ENCODE measurements at regions of chr19 and their contacts with region 1.

Region 1: GRCh38 chr19:1672038-1672768 is 19.8 kb upstream of the TCF3 start:
- DNase-seq: peak; percentile 40 to 75 (median 48)
- ATAC-seq: peak; percentile 63
- H3K4me3 ChIP-seq: no peak overlapping the region
- H3K4me3 Mint-ChIP-seq: no peak overlapping the region
- H3K27ac ChIP-seq: no peak overlapping the region
- H3K27ac Mint-ChIP-seq: no peak overlapping the region
- H3K4me1 ChIP-seq: peaks cover 26% of the 10 kb centered on the region
- H3K4me1 Mint-ChIP-seq: peaks cover 15% of the 10 kb centered on the region
- H3K27me3 ChIP-seq: peaks cover 59 to 73% of the 10 kb centered on the region in 2 experiments
- H3K27me3 Mint-ChIP-seq: peaks cover 69% of the 10 kb centered on the region
- CTCF ChIP-seq: peak; percentile 91

Region 2: GRCh38 chr19:1540365-1540925 is 131.8 kb before region 1 on chr19:
- CTCF ChIA-PET with region 1: no interaction called
- POLR2A ChIA-PET with region 1: no interaction called
- intact Hi-C with region 1: loop called in 1 of 2 experiments (anchors 10 kb)
- DNase-seq: no peak
- ATAC-seq: no peak
- H3K4me3 ChIP-seq: no peak overlapping the region
- H3K4me3 Mint-ChIP-seq: no peak overlapping the region
- H3K27ac ChIP-seq: no peak overlapping the region
- H3K27ac Mint-ChIP-seq: no peak overlapping the region
- H3K4me1 ChIP-seq: peaks cover 5% of the 10 kb centered on the region
- H3K4me1 Mint-ChIP-seq: no peaks in the 10 kb centered on the region
- H3K27me3 ChIP-seq: peaks cover 19 to 27% of the 10 kb centered on the region in 2 experiments
- H3K27me3 Mint-ChIP-seq: peaks cover 35% of the 10 kb centered on the region
- CTCF ChIP-seq: no peak

Region 3: DNA sequence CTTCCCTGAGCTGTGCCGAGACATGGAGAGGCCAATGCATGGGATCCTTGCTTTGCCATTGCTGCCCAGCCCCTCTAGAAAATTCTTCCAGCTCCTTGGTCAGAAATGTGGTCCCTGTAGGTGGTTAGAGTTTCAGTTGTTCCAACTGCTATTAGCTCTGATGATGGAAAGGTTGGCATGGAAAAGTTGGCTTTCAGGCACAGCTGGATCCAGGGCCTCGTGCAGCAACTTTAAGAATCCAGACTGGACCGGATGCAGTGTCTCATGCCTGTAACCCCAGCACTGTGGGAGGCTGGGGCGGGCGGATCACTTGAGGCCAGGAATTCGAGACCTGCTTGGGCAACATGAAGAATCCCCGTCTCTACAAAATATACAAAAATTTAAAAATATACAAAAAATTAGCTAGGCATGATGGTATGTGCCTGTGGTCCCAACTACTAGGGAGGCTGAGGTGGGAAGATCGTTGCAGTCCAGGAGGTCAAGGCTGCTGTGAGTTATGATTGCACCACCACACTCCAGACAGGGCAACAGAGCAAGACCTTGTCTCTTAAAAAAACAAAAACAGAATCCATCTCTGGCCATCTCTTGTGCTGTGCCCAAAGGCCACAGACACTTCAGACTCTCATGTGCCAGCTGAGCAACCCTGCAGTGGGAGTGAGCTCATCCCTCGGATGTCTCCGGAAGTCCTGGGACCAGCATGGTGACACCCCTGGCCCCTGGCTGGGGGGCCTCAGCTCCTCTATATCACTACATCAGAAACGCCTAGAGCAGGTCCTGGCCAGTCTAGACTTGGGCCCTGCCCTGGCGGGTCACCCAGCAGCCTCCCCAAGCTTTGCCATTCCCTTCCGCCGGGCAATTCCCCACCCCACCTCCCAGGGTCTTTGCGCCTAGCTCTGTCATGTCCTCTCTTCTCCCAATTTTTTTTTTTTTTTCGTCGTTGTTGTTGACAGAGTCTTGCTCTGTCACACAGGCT is 120.8 kb before region 1 on chr19:
- CTCF ChIA-PET with region 1: interaction called, 6 read pairs
- POLR2A ChIA-PET with region 1: no interaction called
- intact Hi-C with region 1: loop called (anchors 1 to 10 kb)
- DNase-seq: no peak
- ATAC-seq: no peak
- H3K4me3 ChIP-seq: no peak overlapping the region
- H3K4me3 Mint-ChIP-seq: no peak overlapping the region
- H3K27ac ChIP-seq: no peak overlapping the region
- H3K27ac Mint-ChIP-seq: no peak overlapping the region
- H3K4me1 ChIP-seq: peaks cover 4% of the 10 kb centered on the region
- H3K4me1 Mint-ChIP-seq: no peaks in the 10 kb centered on the region
- H3K27me3 ChIP-seq: no peaks in the 10 kb centered on the region
- H3K27me3 Mint-ChIP-seq: peaks cover 24% of the 10 kb centered on the region
- CTCF ChIP-seq: no peak

Region 4: DNA sequence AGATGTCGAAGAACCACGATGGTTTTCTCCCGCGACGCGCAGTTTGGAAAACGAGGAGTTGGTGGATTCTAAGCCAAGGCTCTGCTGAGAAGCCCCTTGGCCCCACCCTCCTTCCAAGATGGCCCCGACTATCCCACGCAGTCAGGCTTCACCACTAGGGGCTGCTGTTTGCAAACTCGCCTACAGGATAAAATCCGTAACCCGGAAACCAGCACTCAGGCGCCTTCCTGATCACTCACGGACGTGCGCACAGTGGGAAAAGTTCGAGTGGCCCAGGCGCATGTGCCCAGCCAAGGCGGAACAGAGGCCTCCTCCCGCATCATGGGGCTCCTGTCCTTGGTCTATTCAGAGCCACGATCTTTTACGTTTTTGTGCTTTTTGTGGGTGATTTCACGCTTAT is 47.7 kb before region 1 on chr19:
- CTCF ChIA-PET with region 1: no interaction called
- POLR2A ChIA-PET with region 1: no interaction called
- intact Hi-C with region 1: loop called in 1 of 2 experiments (anchors 5 kb)
- DNase-seq: peak; percentile 23 to 72 (median 44)
- ATAC-seq: peak; percentile 94
- H3K4me3 ChIP-seq: no peak overlapping the region
- H3K4me3 Mint-ChIP-seq: no peak overlapping the region
- H3K27ac ChIP-seq: no peak overlapping the region
- H3K27ac Mint-ChIP-seq: no peak overlapping the region
- H3K4me1 ChIP-seq: no peaks in the 10 kb centered on the region
- H3K4me1 Mint-ChIP-seq: peaks cover 7% of the 10 kb centered on the region
- H3K27me3 ChIP-seq: no peaks in the 10 kb centered on the region
- H3K27me3 Mint-ChIP-seq: no peaks in the 10 kb centered on the region
- CTCF ChIP-seq: peak; percentile 51

Region 5: GRCh38 chr19:1767464-1767933 is 95.3 kb after region 1 on chr19:
- CTCF ChIA-PET with region 1: no interaction called
- POLR2A ChIA-PET with region 1: no interaction called
- intact Hi-C with region 1: loop called in 1 of 2 experiments (anchors 2 kb)
- DNase-seq: peak; percentile 36 to 78 (median 55)
- ATAC-seq: peak; percentile 88
- H3K4me3 ChIP-seq: no peak overlapping the region
- H3K4me3 Mint-ChIP-seq: no peak overlapping the region
- H3K27ac ChIP-seq: no peak overlapping the region
- H3K27ac Mint-ChIP-seq: no peak overlapping the region
- H3K4me1 ChIP-seq: peaks cover 9% of the 10 kb centered on the region
- H3K4me1 Mint-ChIP-seq: no peaks in the 10 kb centered on the region
- H3K27me3 ChIP-seq: peaks cover 81 to 86% of the 10 kb centered on the region in 2 experiments
- H3K27me3 Mint-ChIP-seq: peaks cover 84% of the 10 kb centered on the region
- CTCF ChIP-seq: peak; percentile 91

Region 6: DNA sequence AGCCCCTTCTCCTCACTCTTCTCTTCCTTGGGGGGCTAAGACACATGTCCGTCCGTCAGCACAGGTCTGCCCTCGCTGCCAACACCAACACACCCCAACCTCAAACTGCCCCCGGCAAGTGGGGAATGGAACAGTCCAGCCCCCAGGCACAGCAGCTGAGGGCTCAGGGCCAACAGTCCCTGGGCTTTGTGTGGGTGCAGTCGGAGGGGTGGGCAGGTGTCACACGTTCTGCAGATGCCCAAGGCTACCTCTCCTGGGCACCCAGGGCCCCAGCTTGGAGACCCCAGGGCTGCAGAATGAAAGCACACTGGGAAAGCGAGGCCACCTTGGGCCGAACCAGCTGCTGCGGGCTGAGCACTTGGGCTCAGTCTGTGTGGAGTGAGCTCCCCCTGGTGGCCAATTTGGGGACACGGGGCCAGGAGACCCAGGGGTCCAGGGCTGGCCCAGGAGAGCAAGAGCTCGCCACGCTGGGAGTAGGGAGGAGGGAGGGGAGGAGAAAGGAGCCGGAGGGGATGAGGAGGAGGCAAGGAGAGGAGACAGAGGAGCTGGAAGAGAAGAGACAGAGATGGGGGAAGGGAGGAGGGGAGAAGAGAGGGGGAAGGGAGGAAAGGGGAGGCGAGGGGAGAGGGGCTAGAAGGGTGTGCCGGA is 153.8 kb after region 1 on chr19:
- CTCF ChIA-PET with region 1: interaction called, 3 read pairs
- POLR2A ChIA-PET with region 1: no interaction called
- intact Hi-C with region 1: loop called in 1 of 2 experiments (anchors 5 kb)
- DNase-seq: peak; percentile 69 to 88 (median 74)
- ATAC-seq: peak; percentile 86
- H3K4me3 ChIP-seq: no peak overlapping the region
- H3K4me3 Mint-ChIP-seq: peak overlapping the region; percentile 15
- H3K27ac ChIP-seq: no peak overlapping the region
- H3K27ac Mint-ChIP-seq: peak overlapping the region; percentile 30
- H3K4me1 ChIP-seq: peaks cover 10% of the 10 kb centered on the region
- H3K4me1 Mint-ChIP-seq: peaks cover 4% of the 10 kb centered on the region
- H3K27me3 ChIP-seq: no peaks in the 10 kb centered on the region
- H3K27me3 Mint-ChIP-seq: no peaks in the 10 kb centered on the region
- CTCF ChIP-seq: peak; percentile 86